ENCODE measurements at regions of chr17 and their contacts with region 1.

Region 1: DNA sequence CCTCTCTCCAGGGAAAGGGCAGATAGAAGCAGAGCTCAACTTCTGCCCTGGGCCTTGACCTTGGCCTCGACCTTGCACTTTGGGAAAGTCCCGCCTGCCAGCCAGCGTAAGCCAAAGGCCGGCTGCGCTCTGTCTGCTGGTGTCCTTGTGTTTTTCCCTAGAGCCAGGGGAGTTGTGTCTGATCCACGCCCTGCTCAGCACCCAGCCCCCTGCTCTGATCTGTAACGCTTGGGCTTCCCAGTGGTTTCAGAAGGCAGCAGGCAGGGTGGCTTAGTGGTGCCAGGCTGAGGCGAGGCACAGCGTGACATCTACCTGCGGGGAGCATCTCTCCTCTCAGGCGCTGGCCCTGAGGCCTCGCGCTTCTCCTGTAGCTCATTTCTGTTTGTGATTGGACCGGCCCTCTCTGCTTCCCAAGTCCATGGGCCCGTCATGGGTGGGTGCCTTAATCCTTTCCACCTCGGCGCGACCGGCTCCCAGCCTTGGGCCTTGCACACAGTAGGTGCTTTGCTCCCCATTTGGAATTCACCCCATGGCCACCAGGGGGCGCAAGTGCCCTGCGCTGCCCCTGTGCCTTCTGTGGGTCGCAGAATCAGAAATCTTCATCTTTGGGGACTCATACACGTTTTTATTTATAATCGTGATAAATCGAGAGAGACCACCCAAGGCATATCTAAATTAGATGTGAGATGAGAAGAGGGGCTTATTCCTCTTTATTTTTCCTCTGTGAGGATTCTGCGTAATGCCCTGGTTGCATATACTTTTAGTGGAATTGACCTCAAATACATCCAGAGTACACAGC is 24.2 kb downstream of the SGSH start:
- DNase-seq: peak; percentile 33 to 63 (median 59)
- H3K4me3 ChIP-seq: no peak overlapping the region
- H3K4me3 Mint-ChIP-seq: no peak overlapping the region
- H3K27ac ChIP-seq: no peak overlapping the region
- H3K27ac Mint-ChIP-seq: peak overlapping the region in 2 of 7 donors; percentile 49 to 75
- H3K4me1 ChIP-seq: no peaks in the 10 kb centered on the region
- H3K4me1 Mint-ChIP-seq: no peaks in the 10 kb centered on the region
- H3K27me3 ChIP-seq: no peaks in the 10 kb centered on the region
- H3K27me3 Mint-ChIP-seq: peaks cover 11 to 29% (median 24%) of the 10 kb centered on the region in 3 donors
- CTCF ChIP-seq: peak; percentile 100

Region 2: DNA sequence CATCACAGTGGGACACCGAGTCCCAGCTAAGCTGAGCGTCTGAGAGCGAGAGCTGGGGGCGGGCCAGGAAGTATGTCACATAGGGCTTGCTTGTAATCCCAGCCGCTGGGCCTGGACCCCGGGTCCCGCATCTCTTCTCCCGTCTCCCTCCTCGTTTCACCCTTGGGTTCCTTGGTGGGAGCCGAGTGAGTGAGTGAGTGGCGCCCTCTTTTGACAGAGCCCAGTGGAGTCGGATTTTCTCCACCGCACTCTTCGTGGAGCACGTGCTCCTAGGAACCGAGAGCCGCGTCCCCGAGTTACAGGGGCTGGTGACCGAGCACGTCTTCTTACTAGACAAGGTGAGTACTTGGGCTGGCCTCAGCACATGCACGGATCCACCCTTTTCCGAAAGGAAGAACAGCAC is 168.3 kb after region 1 on chr17:
- intact Hi-C with region 1: loop called in 1 of 2 experiments (anchors 10 kb)
- DNase-seq: no peak
- H3K4me3 ChIP-seq: no peak overlapping the region
- H3K4me3 Mint-ChIP-seq: no peak overlapping the region
- H3K27ac ChIP-seq: no peak overlapping the region
- H3K27ac Mint-ChIP-seq: no peak overlapping the region
- H3K4me1 ChIP-seq: no peaks in the 10 kb centered on the region
- H3K4me1 Mint-ChIP-seq: no peaks in the 10 kb centered on the region
- H3K27me3 ChIP-seq: no peaks in the 10 kb centered on the region
- H3K27me3 Mint-ChIP-seq: peaks cover 0 to 1% (median 0%) of the 10 kb centered on the region in 3 donors
- CTCF ChIP-seq: no peak

Measured in CD14-positive monocyte (primary cell).